PC-9 (cell line): ENCODE measurements at regions of chr1 and their contacts with region 1.

Region 1: DNA sequence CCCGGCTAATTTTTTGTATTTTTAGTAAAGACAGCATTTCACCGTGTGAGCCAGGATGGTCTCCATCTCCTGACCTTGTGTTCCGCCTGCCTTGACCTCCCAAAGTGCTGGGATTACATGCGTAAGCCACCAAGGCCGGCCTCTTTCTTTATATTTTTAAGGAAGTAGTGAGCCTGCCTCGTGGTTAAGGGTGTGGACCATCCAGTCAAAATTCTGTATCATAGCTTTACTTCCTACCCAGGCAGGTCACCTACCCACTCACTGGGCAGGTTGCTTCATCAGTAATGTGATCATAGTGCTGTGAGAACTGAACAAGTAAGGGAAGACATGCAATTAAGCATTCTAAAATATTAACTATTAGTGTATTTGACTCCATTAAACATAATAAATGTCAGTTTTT is 8.1 kb upstream of the ACOT7 start:
- DNase-seq: peak in 1 of 2 experiments; percentile 65
- H3K4me3 ChIP-seq: no peak overlapping the region
- H3K27ac ChIP-seq: no peak overlapping the region
- H3K4me1 ChIP-seq: peaks cover 8% of the 10 kb centered on the region; the same call in 1 of the 2 replicates
- H3K27me3 ChIP-seq: no peaks in the 10 kb centered on the region
- CTCF ChIP-seq: no peak

Region 2: DNA sequence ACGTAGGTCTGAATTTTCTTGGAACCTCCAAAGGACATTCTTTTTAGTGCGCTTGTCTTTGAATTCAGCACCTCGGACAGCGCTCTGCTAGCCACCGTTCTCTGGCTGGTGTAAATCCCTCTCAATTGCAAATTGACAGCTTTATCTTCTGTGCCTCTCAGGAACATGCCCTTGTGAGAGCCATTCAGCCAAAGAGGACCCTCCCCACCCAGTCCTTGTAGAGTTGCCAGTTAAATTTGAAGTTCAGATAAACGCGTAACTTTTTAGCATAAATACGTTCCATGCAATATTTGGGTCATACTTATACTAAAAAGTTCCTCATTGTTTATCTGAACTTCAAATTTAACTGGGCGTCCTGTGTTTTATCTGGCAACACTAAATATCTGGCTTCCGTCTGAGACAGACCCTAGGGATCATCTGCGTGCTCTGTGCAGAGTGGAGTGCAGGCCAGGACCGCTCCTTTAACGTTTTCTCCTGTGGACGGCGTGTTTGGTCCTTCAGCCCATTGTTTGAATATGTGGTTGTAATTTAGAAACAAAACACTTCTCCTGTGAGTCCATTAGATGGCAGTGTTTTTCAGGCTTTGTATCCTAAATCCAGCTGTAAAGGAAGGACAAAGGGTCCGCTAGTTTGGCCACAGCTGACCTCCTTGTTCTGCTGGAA is 349.0 kb before region 1 on chr1:
- CTCF ChIA-PET with region 1: no interaction called
- POLR2A ChIA-PET with region 1: no interaction called
- intact Hi-C with region 1: loop called (anchors 10 kb)
- DNase-seq: peak in 1 of 2 experiments; percentile 46
- H3K4me3 ChIP-seq: no peak overlapping the region
- H3K27ac ChIP-seq: no peak overlapping the region
- H3K4me1 ChIP-seq: no peaks in the 10 kb centered on the region; the same call in 1 of the 2 replicates
- H3K27me3 ChIP-seq: no peaks in the 10 kb centered on the region
- CTCF ChIP-seq: peak; percentile 71

Region 3: GRCh38 chr1:6343506-6344405 is 57.9 kb before region 1 on chr1:
- CTCF ChIA-PET with region 1: no interaction called
- POLR2A ChIA-PET with region 1: no interaction called
- intact Hi-C with region 1: loop called (anchors 1 kb)
- DNase-seq: peak; percentile 88 to 92
- H3K4me3 ChIP-seq: no peak overlapping the region
- H3K27ac ChIP-seq: no peak overlapping the region
- H3K4me1 ChIP-seq: peaks cover 7% of the 10 kb centered on the region
- H3K27me3 ChIP-seq: no peaks in the 10 kb centered on the region
- CTCF ChIP-seq: peak; percentile 93

Region 4: DNA sequence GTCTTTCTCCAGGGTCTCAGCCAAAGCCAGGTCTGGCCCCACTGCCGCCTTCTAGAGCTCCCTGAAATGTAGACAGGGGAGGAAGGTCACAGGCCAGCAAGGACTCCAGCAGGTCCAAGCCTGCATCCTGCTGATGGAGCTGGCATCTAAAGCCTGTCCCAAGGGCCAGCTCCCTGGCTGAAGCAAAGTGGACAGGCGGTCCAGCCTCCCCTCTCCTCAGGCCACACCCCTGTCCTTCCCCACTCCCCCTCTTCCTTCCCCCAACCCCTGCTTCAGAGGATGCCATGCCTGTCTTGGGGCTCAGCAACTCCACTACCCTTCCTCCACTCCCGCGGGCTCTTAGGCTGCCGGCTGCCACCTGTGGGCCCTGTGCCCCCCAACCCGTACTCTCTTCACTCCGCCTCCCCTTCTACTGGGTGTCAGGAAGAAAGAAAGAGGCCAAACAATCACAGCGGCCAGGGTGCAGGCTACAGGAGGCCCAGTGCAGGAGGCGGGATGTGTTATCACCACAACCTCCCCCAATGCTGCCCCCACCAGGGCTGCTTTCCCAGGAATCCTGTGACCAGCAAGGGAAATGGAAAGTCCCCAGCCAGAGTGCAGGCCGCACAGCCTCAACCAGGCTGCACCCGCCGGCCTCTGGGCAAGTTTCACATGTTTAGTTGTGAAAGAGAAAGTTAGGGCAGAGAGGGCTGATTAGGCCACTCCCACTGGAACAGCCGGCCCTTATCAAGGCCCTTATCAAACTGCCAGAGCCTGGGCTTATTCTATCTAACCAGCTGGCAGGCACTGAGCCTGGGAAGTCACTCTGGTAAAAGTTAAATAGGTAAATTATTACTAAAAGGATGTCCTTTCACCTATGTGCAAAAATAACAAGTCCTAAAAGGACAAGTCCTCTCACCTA is 42.2 kb before region 1 on chr1:
- CTCF ChIA-PET with region 1: interaction called, 8 read pairs
- POLR2A ChIA-PET with region 1: interaction called, 16 read pairs
- intact Hi-C with region 1: loop called (anchors 1 kb)
- DNase-seq: peak; percentile 42 to 55
- H3K4me3 ChIP-seq: no peak overlapping the region
- H3K27ac ChIP-seq: no peak overlapping the region
- H3K4me1 ChIP-seq: 0 out of 2 replicates have a peak, but pooled peaks cover 5% of the 10 kb centered on the region
- H3K27me3 ChIP-seq: no peaks in the 10 kb centered on the region
- CTCF ChIP-seq: no peak

Region 5: DNA sequence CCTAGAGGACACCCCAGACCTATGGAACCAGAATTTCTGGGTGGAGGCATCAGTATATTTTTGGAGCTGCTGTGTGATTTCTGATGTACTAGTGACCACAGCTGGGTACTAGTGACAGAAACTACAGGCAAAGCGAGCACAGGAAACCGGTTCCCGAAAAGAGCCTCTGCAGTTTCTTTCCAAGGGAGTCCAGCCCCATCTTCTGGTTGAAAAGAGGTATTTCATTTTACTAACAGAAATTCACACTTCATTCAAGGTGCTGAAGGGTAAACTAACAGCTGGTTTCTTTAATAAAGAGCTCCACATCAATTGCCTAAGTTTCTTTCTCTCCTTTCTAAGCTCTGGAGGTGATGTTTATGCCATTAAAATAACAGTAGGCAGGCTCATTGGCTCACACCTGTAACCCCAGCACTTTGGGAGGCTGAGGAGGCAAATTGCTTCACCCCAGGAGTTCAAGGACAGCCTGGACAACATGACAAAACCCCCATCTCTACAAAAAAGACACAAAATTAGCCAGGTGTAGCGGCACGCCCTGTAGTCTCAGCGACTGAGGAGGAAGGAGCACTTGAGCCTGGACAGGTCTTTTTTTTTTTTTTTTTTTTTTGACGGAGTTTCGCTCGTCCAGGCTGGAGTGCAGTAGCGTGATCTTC is 245.0 kb after region 1 on chr1:
- CTCF ChIA-PET with region 1: interaction called, 10 read pairs
- POLR2A ChIA-PET with region 1: no interaction called
- intact Hi-C with region 1: no loop called
- DNase-seq: peak; percentile 7 to 40
- H3K4me3 ChIP-seq: no peak overlapping the region
- H3K27ac ChIP-seq: no peak overlapping the region
- H3K4me1 ChIP-seq: no peaks in the 10 kb centered on the region
- H3K27me3 ChIP-seq: no peaks in the 10 kb centered on the region
- CTCF ChIP-seq: peak; percentile 64